CD4-positive, alpha-beta memory T cell (primary cell): ENCODE measurements at regions of chr14 and their contacts with region 1.

Region 1: DNA sequence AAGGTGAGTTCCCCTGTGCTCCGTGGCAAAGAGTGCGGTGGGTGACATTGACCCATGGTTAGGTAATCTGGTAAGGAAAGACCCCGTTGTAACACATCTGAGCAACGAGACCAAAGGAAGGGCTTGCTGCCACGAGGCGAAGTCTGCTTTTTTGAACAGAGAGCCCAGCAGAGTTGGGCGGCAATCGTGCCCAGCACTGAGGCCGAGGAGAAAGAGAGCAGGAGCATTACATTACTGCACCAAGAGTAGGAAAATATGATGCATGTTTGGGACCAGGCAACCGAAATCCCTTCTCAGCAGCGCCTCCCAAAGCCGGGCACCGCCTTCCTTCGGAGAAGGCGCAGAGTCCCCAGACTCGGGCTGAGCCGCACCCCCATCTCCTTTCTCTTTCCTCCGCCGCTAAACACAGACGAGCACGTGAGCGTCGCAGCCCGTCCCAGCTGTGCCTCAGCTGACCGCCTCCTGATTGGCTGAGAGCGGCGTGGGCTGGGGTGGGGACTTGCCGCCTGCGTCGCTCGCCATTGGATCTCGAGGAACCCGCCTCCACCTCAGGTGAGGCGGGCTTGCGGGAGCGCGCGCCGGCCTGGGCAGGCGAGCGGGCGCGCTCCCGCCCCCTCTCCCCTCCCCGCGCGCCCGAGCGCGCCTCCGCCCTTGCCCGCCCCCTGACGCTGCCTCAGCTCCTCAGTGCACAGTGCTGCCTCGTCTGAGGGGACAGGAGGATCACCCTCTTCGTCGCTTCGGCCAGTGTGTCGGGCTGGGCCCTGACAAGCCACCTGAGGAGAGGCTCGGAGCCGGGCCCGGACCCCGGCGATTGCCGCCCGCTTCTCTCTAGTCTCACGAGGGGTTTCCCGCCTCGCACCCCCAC is at the start of gene HIF1A:
- DNase-seq: peak; percentile 94 to 98 (median 97)
- H3K4me3 ChIP-seq: peak within 1 kb of the TSS; percentile 74 to 92
- H3K4me3 Mint-ChIP-seq: peak within 1 kb of the TSS; percentile 90 to 99 (median 97)
- H3K27ac ChIP-seq: peak within 1 kb of the TSS; percentile 88
- H3K27ac Mint-ChIP-seq: peak within 1 kb of the TSS; percentile 94 to 98 (median 97)
- H3K4me1 ChIP-seq: peaks cover 51% of the 10 kb centered on the region
- H3K4me1 Mint-ChIP-seq: peaks cover 33 to 70% (median 48%) of the 10 kb centered on the region in 4 donors
- H3K27me3 ChIP-seq: no peaks in the 10 kb centered on the region
- H3K27me3 Mint-ChIP-seq: no peaks in the 10 kb centered on the region
- total RNA-seq, gene HIF1A: 84.7 to 87.1 TPM

Region 2: GRCh38 chr14:61585598-61586543 is 109.2 kb before region 1 on chr14:
- CTCF ChIA-PET with region 1: no interaction called
- POLR2A ChIA-PET with region 1: no interaction called
- intact Hi-C with region 1: no loop called
- DNase-seq: no peak
- H3K4me3 ChIP-seq: no peak overlapping the region
- H3K4me3 Mint-ChIP-seq: no peak overlapping the region
- H3K27ac ChIP-seq: no peak overlapping the region
- H3K27ac Mint-ChIP-seq: peak overlapping the region in 1 of 7 donors; percentile 65
- H3K4me1 ChIP-seq: no peaks in the 10 kb centered on the region
- H3K4me1 Mint-ChIP-seq: peaks cover 0 to 3% (median 0%) of the 10 kb centered on the region in 4 donors
- H3K27me3 ChIP-seq: no peaks in the 10 kb centered on the region
- H3K27me3 Mint-ChIP-seq: no peaks in the 10 kb centered on the region

Region 3: DNA sequence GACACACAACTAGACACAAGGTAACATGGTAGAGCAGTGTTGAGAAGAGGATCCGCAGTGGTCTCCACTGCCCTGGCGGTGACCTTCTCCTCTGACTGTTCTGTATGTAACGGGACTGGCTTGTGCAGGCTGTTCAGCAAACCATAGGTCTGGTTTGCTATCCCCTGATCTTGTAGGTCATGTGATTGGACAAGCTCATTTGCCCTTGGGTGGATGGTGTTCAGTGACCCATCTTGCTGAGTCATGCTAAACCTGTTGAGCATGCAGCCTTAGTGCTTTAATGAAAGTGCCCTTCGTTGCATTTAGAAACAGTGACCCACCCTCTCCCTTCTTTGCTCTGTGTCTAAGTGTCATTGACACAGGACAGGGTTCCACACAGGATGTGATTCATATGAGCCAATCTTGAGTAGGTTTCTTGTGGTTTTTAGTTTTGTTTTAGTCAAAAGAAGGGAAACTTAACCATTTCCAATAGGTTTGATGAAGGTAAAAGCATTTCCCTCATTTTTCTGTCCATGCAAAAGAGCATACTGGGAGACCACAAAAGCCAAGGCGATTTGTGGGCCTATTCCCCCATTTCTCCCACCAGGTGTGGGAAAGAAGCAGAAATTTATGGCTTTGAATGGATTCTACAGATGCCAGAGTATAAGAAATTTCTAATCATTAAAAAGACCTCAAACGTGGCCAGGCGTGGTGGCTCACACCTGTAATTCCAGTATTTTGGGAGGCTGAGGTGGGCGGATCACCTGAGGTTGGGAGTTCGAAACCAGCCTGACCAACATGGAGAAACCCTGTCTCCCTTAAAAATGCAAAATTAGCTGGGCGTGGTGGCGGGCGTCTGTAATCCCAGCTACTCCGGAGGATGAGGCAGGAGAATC is 32.4 kb before region 1 on chr14:
- CTCF ChIA-PET with region 1: interaction called, 3 read pairs
- POLR2A ChIA-PET with region 1: interaction called, 24 read pairs
- intact Hi-C with region 1: loop called (anchors 1 kb)
- DNase-seq: peak; percentile 61 to 78 (median 69)
- H3K4me3 ChIP-seq: peak overlapping the region; percentile 26 to 37
- H3K4me3 Mint-ChIP-seq: peak overlapping the region; percentile 74 to 92 (median 82)
- H3K27ac ChIP-seq: peak overlapping the region; percentile 37
- H3K27ac Mint-ChIP-seq: peak overlapping the region; percentile 92 to 98 (median 95)
- H3K4me1 ChIP-seq: peaks cover 57% of the 10 kb centered on the region
- H3K4me1 Mint-ChIP-seq: peaks cover 47 to 56% (median 54%) of the 10 kb centered on the region in 4 donors
- H3K27me3 ChIP-seq: no peaks in the 10 kb centered on the region
- H3K27me3 Mint-ChIP-seq: no peaks in the 10 kb centered on the region

Region 4: DNA sequence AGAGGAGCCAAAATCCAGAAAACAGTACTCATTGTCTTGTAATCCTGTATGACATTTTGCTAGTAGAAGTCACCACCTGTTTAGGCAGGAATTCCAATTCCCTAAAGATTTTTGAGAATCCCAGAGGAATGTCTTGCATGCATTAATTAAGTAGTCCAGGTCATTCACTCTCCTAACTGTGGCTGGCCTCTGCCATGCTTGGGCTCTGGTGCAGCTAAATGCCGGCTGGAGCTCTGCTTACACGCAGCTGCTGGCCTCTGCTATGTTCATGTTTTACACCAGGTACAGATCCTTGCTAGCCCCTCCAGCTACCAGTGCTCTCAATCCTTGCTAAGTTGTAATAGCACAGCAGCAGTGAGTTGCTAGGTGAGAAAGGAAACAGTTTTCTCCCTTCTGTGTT is 16.1 kb before region 1 on chr14:
- CTCF ChIA-PET with region 1: interaction called, 15 read pairs
- POLR2A ChIA-PET with region 1: interaction called, 9 read pairs
- intact Hi-C with region 1: loop called (anchors 2 kb)
- DNase-seq: no peak
- H3K4me3 ChIP-seq: no peak overlapping the region
- H3K4me3 Mint-ChIP-seq: no peak overlapping the region
- H3K27ac ChIP-seq: no peak overlapping the region
- H3K27ac Mint-ChIP-seq: no peak overlapping the region
- H3K4me1 ChIP-seq: no peaks in the 10 kb centered on the region
- H3K4me1 Mint-ChIP-seq: peaks cover 0 to 5% (median 0%) of the 10 kb centered on the region in 4 donors
- H3K27me3 ChIP-seq: no peaks in the 10 kb centered on the region
- H3K27me3 Mint-ChIP-seq: no peaks in the 10 kb centered on the region

Region 5: DNA sequence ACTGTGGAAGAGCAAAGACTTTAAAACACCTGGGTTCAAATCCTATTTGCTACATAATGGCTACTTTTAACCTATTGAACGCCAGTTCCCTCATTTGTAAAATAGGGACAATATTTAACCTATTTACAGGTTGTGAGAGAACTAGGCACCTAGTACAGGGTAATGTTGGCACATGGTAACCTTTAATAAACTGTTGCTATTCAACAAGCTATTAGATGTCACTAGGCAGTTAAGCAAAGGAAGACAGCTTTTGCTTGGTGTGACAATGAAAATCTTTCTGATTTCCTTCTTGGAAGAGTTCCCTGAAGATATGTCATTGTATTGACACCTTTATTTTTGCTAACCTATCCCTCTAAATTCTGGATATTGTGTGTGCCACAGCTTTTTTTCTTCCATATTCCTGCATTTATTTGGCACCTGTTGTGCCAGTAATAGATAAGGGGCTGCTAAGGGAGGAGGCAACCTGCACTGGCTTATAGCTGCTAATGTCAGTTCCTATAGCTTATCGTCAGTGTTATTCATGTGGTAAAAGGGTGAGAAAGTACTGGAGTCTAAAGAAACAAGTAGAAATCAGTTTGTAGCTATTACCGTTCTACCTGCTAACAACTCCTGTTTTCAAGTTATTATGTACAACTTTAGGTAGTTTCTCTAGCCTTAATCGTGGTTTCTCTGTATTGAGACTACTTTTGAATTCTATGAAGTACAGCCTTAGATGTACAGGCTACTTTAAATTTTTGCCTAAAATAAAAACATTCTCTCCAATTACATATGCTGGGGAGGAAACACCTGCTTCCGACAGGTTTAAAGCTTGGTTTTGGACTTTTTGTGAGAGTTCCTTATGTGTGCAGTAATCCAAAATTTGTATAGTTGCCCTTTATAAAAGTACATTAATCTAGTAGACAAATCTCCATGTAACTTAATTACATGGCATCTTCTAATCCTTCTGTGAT is 24.6 kb after region 1 on chr14:
- CTCF ChIA-PET with region 1: interaction called, 5 read pairs
- POLR2A ChIA-PET with region 1: interaction called, 16 read pairs
- intact Hi-C with region 1: no loop called
- DNase-seq: peak in 3 of 5 donors; percentile 26 to 33 (median 26)
- H3K4me3 ChIP-seq: peak overlapping the region in 1 of 2 donors; percentile 3
- H3K4me3 Mint-ChIP-seq: peak overlapping the region in 6 of 8 donors; percentile 14 to 74 (median 50)
- H3K27ac ChIP-seq: peak overlapping the region; percentile 7
- H3K27ac Mint-ChIP-seq: peak overlapping the region; percentile 32 to 87 (median 77)
- H3K4me1 ChIP-seq: peaks cover 59% of the 10 kb centered on the region
- H3K4me1 Mint-ChIP-seq: peaks cover 41 to 72% (median 60%) of the 10 kb centered on the region in 4 donors
- H3K27me3 ChIP-seq: no peaks in the 10 kb centered on the region
- H3K27me3 Mint-ChIP-seq: no peaks in the 10 kb centered on the region

Region 6: DNA sequence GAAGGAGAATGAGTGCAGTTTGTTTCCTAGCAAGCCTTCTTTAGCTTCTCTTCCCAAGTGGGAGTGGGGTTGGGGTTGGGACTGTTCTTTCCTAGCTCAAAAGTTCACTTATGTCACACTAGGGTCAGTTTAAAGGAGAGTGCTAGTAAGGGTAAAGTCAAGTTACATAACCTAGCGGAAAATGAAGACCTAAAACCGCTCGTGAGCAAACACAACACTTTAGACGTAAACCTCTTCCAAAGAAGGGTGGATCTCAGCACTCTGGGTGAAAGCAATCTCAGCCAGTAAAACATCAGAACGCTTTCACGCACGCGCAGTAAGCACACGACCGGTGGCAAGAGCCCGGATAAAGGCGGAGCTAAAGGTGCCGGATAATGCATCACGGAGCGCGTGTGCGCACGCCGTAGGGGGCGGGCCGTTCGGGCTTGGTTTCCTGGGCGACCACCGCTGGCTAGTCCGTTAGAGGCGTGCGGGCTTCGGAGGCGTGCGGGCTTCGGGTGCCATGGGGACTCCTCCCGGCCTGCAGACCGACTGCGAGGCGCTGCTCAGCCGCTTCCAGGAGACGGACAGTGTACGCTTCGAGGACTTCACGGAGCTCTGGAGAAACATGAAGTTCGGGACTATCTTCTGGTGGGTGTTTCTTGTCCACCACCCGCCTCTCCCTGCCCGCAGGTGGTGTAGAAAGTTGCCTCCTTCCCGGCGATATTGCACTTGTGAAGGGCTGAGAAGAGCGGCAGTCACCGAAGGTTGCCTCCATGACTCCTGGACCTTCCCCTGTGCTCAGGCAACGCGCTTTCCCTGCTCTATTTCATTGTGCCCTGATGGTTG is 67.1 kb after region 1 on chr14 and contains the start of gene SNAPC1:
- CTCF ChIA-PET with region 1: interaction called, 3 read pairs
- POLR2A ChIA-PET with region 1: interaction called, 7 read pairs
- intact Hi-C with region 1: loop called (anchors 2 kb)
- DNase-seq: peak; percentile 96 to 98 (median 97)
- H3K4me3 ChIP-seq: peak within 1 kb of the TSS; percentile 80 to 85
- H3K4me3 Mint-ChIP-seq: peak within 1 kb of the TSS; percentile 96 to 100 (median 99)
- H3K27ac ChIP-seq: peak within 1 kb of the TSS; percentile 90
- H3K27ac Mint-ChIP-seq: peak within 1 kb of the TSS; percentile 99 to 100 (median 100)
- H3K4me1 ChIP-seq: peaks cover 38% of the 10 kb centered on the region
- H3K4me1 Mint-ChIP-seq: peaks cover 25 to 54% (median 31%) of the 10 kb centered on the region in 4 donors
- H3K27me3 ChIP-seq: no peaks in the 10 kb centered on the region
- H3K27me3 Mint-ChIP-seq: no peaks in the 10 kb centered on the region
- total RNA-seq, gene SNAPC1: 4.0 to 4.2 TPM